ENCODE measurements at regions of chr14 and their contacts with region 1.

Region 1: GRCh38 chr14:44942436-44942835 is 19.3 kb downstream of the KLHL28 start:
- DNase-seq: no peak
- H3K4me3 ChIP-seq: no peak overlapping the region
- H3K27ac ChIP-seq: no peak overlapping the region
- H3K4me1 ChIP-seq: no peaks in the 10 kb centered on the region
- H3K27me3 ChIP-seq: no peaks in the 10 kb centered on the region
- CTCF ChIP-seq: no peak
- POLR2A ChIP-seq: no peak

Region 2: GRCh38 chr14:44149597-44149996 is 792.8 kb before region 1 on chr14:
- intact Hi-C with region 1: no loop called
- DNase-seq: no peak
- H3K4me3 ChIP-seq: no peak overlapping the region
- H3K27ac ChIP-seq: no peak overlapping the region
- H3K4me1 ChIP-seq: no peaks in the 10 kb centered on the region
- H3K27me3 ChIP-seq: no peaks in the 10 kb centered on the region
- CTCF ChIP-seq: no peak
- POLR2A ChIP-seq: no peak

Region 3: DNA sequence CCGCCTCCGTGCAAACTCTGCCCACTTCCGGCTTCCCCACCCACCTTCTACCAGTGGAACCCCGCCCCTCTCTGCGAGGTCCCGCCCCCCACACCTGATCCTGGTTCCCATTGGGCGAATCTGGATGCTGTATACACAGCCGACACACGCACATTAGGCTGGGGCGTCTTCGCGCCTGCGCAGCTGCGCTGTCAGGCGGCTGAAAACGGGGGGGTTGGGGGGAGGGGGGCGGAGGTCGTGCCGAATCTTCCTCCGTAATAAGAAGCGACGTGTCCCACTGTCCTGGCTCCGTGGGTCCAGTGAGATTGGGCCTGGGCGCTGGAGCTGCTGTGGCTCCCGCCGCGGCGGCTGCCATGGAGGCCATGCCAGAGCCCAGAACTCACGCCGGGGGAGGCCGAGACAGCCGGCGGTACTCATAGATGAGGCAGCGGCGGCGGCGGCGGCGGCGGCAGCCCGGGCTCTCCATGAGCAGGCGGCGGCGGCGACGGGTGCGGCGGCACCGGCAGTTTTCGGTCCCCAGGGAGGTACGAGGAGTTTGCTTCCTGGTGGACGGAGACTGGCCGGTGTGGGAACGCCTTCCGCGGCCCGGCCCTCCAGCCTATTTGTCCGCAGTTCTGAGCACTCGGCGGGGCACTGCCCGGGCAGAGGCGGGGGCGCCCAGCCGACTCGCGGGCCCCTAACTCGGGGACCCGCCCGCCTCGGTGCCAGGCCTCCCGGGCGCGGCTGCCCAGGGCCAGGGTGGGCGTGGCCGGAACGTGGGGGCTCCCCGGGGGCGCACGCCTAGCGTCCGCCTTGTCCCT is 45.2 kb before region 1 on chr14:
- intact Hi-C with region 1: no loop called
- DNase-seq: peak; percentile 97 to 98
- H3K4me3 ChIP-seq: peak overlapping the region; percentile 89 to 94 (median 91)
- H3K27ac ChIP-seq: peak overlapping the region; percentile 99
- H3K4me1 ChIP-seq: peaks cover 0 to 7% of the 10 kb centered on the region in 2 donors
- H3K27me3 ChIP-seq: no peaks in the 10 kb centered on the region
- CTCF ChIP-seq: peak in 1 of 3 donors; percentile 9
- POLR2A ChIP-seq: peak; percentile 33

Region 4: DNA sequence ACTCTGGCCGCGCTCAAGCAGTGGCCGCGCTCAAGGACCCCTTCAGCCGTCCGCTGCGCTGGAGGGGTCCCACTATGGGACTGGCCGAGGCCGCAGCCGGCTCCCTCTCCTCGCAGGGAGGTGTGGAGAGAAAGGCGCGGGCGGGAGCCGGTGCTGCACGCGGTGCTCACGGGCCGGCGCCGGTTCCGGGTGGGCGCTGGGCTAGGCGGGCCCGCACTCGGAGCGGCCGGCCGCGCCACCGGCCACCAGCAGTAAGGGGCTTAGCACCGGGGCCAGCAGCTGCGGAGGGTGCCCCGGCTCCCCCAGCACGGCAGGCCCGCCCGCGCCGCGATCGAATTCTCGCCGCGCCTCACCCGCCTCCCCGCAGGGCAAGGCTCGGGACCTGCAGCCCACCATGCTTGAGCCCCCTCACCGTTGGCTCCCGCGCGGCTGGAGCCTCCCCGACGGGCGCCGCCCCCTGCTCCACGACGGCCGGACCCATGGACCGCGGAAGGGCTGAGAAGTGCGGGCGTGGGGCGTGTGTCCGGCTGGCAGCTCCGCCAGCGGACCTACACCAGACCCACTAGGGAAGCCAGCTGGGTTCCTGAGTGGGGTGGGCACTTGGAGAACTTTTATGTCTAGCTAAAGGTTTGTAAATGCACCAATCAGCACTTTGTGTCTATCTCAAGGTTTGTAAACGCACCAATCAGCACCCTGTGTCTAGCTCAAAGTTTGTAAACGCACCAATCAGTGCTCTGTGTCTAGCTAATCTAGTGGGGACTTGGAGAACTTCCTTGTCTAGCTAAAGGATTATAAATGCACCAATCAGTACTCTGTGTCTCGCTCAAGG is 30.2 kb before region 1 on chr14:
- intact Hi-C with region 1: loop called (anchors 2 kb)
- DNase-seq: no peak
- H3K4me3 ChIP-seq: peak overlapping the region; percentile 41 to 85 (median 54)
- H3K27ac ChIP-seq: no peak overlapping the region
- H3K4me1 ChIP-seq: no peaks in the 10 kb centered on the region
- H3K27me3 ChIP-seq: peaks cover 3 to 18% of the 10 kb centered on the region in 2 donors
- CTCF ChIP-seq: no peak
- POLR2A ChIP-seq: no peak

Region 5: GRCh38 chr14:44961604-44962333 is 19.3 kb after region 1 on chr14 and contains the starts of genes KLHL28 and TOGARAM1:
- intact Hi-C with region 1: no loop called
- DNase-seq: peak; percentile 93 to 99
- H3K4me3 ChIP-seq: peak within 1 kb of the TSS; percentile 76 to 84 (median 84)
- H3K27ac ChIP-seq: peak within 1 kb of the TSS; percentile 86 to 93
- H3K4me1 ChIP-seq: peaks cover 3 to 28% of the 10 kb centered on the region in 2 donors
- H3K27me3 ChIP-seq: no peaks in the 10 kb centered on the region
- CTCF ChIP-seq: no peak
- POLR2A ChIP-seq: peak; percentile 28
- total RNA-seq, gene KLHL28: 9.9 to 17.7 (median 10.5) TPM
- total RNA-seq, gene TOGARAM1: 21.3 to 38.1 (median 22.9) TPM

Region 6: DNA sequence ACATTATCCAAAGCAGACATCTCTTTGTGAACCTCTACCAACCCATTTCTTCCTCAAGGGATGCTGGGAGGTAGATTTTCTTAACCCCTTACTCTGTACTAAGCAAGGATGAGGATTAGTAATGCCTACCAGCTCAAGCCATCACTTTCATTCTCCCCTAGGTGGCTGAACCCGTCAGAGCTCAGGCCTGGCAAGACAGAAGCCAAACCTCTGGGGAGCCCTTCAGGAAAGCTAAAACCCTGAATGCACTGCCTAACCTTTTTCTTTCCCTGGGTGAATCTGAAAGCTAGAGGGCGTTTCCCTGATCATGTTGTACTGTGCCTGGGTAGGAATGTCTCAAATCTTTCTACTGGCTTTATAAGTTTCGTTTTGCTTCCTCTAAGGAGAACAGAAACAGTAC is 1091.9 kb after region 1 on chr14:
- intact Hi-C with region 1: no loop called
- DNase-seq: no peak
- H3K4me3 ChIP-seq: no peak overlapping the region
- H3K27ac ChIP-seq: no peak overlapping the region
- H3K4me1 ChIP-seq: no peaks in the 10 kb centered on the region
- H3K27me3 ChIP-seq: no peaks in the 10 kb centered on the region
- CTCF ChIP-seq: no peak
- POLR2A ChIP-seq: no peak